Lower leg skin (tissue), 4 donors: ENCODE measurements at regions of chr13 and their contacts with region 1.

Region 1: GRCh38 chr13:20101484-20102316 is 59.2 kb downstream of the GJA3 start:
- DNase-seq: no peak
- H3K4me3 ChIP-seq: no peak overlapping the region
- CTCF ChIP-seq: no peak
- POLR2A ChIP-seq: no peak

Region 2: DNA sequence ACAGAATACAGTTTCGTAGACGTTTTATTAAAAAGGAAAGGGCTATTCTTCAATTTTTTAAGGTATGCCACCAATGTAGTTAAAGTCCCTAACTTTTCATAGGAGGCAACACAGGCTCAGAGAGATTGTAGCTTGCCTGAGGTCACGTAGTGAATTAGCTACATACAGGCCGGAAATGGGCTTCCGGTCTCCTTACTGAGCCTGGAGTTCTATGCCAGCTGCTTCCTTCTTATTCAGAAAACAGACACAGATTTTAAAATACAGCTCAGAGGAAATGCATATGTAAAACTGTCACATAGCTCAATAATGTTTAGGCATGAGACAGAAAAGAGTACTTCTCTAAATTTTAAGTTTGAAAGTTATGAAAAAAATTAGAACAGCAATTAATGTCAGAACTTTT is 834.7 kb before region 1 on chr13:
- intact Hi-C with region 1: loop called (anchors 5 kb)
- DNase-seq: no peak
- H3K4me3 ChIP-seq: no peak overlapping the region
- CTCF ChIP-seq: no peak
- POLR2A ChIP-seq: no peak